Naive thymus-derived CD4-positive, alpha-beta T cell (primary cell): ENCODE measurements at regions of chr9 and their contacts with region 1.

Region 1: GRCh38 chr9:109817846-109818472 is 38.0 kb downstream of the PALM2AKAP2 start:
- DNase-seq: peak in 4 of 9 donors; percentile 1 to 31 (median 10)
- ATAC-seq: no peak
- H3K4me3 ChIP-seq: no peak overlapping the region
- H3K4me3 Mint-ChIP-seq: no peak overlapping the region
- H3K27ac ChIP-seq: no peak overlapping the region
- H3K27ac Mint-ChIP-seq: no peak overlapping the region
- H3K4me1 ChIP-seq: no peaks in the 10 kb centered on the region
- H3K4me1 Mint-ChIP-seq: peaks cover 0 to under 1% (median 0%) of the 10 kb centered on the region in 7 donors
- H3K27me3 ChIP-seq: no peaks in the 10 kb centered on the region
- H3K27me3 Mint-ChIP-seq: peaks cover 5 to 16% (median 7%) of the 10 kb centered on the region in 5 donors

Region 2: DNA sequence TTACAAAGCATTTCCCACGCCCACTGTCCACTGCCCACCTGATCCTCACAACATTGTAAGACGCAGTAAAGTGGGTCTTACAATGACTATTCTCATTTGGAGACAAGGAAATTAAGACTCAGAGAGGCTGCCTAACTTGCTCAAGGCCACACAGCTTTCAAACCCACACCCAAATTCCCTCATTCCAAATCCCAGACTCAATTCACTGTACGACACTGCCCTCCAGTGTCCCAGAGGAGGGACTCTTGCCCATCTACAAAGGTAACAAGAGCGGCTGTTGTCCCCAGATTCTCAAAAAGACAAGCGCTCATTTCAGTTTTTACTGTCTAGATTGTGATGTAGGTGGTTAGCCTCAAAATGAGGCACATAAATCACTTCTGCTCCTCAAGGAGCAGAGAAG is 1146.8 kb before region 1 on chr9:
- CTCF ChIA-PET with region 1: no interaction called
- POLR2A ChIA-PET with region 1: no interaction called
- intact Hi-C with region 1: no loop called
- DNase-seq: no peak
- ATAC-seq: no peak
- H3K4me3 ChIP-seq: no peak overlapping the region
- H3K4me3 Mint-ChIP-seq: no peak overlapping the region
- H3K27ac ChIP-seq: no peak overlapping the region
- H3K27ac Mint-ChIP-seq: no peak overlapping the region
- H3K4me1 ChIP-seq: no peaks in the 10 kb centered on the region
- H3K4me1 Mint-ChIP-seq: peaks cover 0 to 1% (median 0%) of the 10 kb centered on the region in 7 donors
- H3K27me3 ChIP-seq: no peaks in the 10 kb centered on the region
- H3K27me3 Mint-ChIP-seq: peaks cover 0 to 3% (median 0%) of the 10 kb centered on the region in 5 donors

Region 3: DNA sequence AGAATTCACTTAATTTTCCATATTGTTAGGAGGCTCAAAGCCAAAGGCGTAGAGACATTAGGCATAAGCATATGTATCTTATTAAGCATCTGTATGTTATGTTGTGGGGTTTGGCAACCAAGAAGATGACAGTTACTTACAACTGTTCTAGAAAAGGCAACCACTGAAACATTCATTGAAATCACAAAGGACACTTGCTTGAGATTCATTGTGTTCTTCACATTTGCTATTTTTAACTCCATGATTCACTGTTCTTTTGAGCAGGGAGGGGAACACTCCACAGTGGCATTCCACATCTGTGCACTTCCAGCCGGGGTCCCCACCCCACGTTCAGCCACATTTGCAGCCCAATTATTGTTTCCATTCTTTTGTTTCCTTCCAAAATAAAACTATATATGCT is 69.1 kb after region 1 on chr9:
- CTCF ChIA-PET with region 1: no interaction called
- POLR2A ChIA-PET with region 1: no interaction called
- intact Hi-C with region 1: loop called in 1 of 2 experiments (anchors 5 kb)
- DNase-seq: no peak
- ATAC-seq: no peak
- H3K4me3 ChIP-seq: no peak overlapping the region
- H3K4me3 Mint-ChIP-seq: peak overlapping the region in 2 of 10 donors; percentile 14 to 73
- H3K27ac ChIP-seq: no peak overlapping the region
- H3K27ac Mint-ChIP-seq: peak overlapping the region in 3 of 9 donors; percentile 23 to 92 (median 88)
- H3K4me1 ChIP-seq: no peaks in the 10 kb centered on the region
- H3K4me1 Mint-ChIP-seq: peaks cover 7 to 82% (median 32%) of the 10 kb centered on the region in 7 donors
- H3K27me3 ChIP-seq: no peaks in the 10 kb centered on the region
- H3K27me3 Mint-ChIP-seq: no peaks in the 10 kb centered on the region